Activated naive CD4-positive, alpha-beta T cell treated with anti-CD3 and anti-CD28 coated beads for 36 hours (primary cell): ENCODE measurements at regions of chr7 and their contacts with region 1.

Region 1: GRCh38 chr7:102396027-102397019 is at the start of gene PRKRIP1:
- DNase-seq: peak; percentile 91
- H3K4me3 Mint-ChIP-seq: peak within 1 kb of the TSS; percentile 91
- H3K27ac Mint-ChIP-seq: peak within 1 kb of the TSS; percentile 88
- H3K4me1 Mint-ChIP-seq: peaks cover 19% of the 10 kb centered on the region
- H3K27me3 Mint-ChIP-seq: no peaks in the 10 kb centered on the region
- total RNA-seq, gene PRKRIP1: 17.8 to 18.5 TPM

Region 2: GRCh38 chr7:102044984-102045673 is 351.2 kb before region 1 on chr7:
- CTCF ChIA-PET with region 1: no interaction called
- intact Hi-C with region 1: no loop called
- DNase-seq: no peak
- H3K4me3 Mint-ChIP-seq: no peak overlapping the region
- H3K27ac Mint-ChIP-seq: no peak overlapping the region
- H3K4me1 Mint-ChIP-seq: peaks cover 9% of the 10 kb centered on the region
- H3K27me3 Mint-ChIP-seq: no peaks in the 10 kb centered on the region

Region 3: DNA sequence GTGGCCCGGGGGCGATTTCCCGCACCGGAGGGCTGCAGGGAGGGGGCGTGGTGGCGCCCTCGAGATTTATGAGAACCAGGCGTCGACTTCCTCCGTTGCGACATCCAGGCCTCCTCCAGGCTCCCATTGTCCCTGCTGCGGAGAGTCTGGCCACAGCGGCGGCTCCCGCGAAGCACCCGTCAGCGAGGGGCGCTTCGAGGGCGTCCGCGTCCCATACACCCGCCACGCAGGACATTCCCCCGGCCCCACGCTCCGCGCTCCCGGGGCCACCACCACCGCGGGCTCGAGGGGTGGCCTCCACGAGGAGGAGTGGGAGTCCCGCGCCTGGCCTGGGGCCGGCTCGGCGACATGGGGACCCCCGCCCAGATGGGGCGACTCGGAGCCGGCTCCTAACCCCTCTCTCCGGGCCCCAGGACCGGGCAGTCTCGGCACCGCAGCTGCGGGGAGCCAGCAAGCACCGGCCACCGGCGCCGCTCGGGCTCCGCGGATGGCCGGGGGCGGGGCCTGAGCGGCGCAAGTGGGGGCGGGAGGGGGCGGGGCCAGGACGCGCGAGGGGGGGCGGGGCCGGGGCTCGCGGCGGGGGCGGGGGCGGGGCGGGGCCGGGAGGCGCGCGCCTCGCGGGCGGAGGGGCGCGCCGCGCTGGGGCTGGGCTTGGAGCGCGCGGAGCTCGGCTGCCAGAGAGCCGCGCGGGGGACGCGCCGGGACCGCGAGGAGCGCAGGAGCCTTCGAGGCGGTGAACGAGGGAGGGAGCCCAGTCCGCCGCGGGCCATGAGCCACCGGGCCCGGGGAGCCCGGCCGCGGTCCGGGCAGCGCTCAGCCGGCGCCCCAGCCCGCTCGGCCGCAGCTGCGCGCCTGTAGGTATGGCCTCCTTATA is 109.8 kb before region 1 on chr7 and contains the start of gene SH2B2:
- CTCF ChIA-PET with region 1: interaction called, 4 read pairs
- intact Hi-C with region 1: loop called (anchors 1 kb)
- DNase-seq: peak; percentile 56
- H3K4me3 Mint-ChIP-seq: peak within 1 kb of the TSS; percentile 64
- H3K27ac Mint-ChIP-seq: no peak within 1 kb of the TSS
- H3K4me1 Mint-ChIP-seq: peaks cover 28% of the 10 kb centered on the region
- H3K27me3 Mint-ChIP-seq: peaks cover 10% of the 10 kb centered on the region
- total RNA-seq, gene SH2B2: 1.4 TPM

Region 4: DNA sequence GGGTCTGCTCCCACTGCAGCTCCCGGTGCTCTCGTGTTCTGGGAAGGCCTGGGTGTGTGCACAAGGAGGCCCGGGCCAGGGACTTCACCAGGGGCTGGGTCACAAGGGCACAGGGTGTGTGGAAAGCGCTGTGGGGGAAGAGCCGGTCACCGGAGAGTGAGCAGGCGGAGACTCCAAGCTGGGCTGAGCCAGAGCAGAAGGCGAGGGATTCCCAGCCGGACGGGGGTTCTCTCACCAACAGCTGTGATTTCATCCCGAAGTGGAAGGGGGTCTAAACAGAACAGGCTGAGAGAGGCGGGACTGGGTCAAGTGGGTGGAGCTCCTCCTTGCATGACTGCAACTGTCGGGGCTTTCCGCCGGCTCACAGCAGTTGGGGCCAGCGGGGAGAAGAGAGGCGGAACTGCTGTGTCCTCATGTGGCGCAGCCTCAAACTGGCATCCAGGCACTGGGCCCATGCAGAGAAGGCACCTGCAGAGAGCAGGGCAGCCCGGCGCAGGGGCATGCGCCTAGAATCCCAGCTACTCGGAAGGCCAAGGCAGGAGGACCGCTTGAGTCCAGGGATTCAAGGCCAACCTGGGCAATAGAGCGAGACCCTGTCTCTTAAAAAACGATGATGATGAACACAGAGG is 29.4 kb after region 1 on chr7:
- CTCF ChIA-PET with region 1: interaction called, 5 read pairs
- intact Hi-C with region 1: loop called (anchors 1 kb)
- DNase-seq: peak; percentile 93
- H3K4me3 Mint-ChIP-seq: peak overlapping the region; percentile 77
- H3K27ac Mint-ChIP-seq: peak overlapping the region; percentile 100
- H3K4me1 Mint-ChIP-seq: peaks cover 67% of the 10 kb centered on the region
- H3K27me3 Mint-ChIP-seq: no peaks in the 10 kb centered on the region

Region 5: DNA sequence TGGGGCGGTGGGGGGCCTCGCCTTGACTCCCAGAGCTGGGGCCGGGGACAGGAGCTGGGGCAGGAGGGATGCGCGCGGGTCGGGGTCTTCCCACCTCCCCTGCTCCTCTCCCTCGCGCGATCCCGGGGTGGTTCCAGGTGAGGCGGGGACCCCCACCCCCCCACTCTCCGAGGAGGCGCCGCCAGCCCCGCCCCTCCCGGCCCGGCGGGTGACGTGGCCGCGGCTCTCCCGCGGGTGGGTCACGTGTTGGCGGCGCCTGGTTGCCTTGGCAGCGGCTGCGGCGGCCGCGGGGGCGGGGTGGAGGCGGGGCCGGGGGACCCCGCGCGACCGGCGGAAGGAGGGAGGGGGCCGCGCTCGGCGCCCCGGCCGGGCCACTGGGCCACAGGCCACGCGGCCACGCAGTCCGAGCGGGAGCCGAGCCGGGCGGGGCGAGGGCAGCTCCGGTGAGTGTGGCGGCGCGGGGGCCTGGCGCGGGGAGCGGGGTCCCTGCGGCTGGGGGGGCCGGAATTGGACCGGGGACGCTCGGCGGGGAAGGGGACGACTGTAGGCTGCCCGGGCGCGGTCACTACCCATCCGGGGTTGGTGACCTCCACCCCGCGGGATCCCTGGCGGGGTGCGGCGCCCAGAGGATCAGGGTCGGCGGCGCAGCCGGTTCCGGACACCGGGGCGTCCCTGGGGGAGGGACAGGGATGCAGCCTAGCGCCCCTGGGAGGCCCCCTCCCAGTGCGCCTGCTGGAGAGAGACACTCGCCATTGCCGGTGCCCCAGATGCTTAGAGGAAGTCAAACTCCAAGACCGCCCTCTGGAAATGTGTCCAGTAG is 37.1 kb after region 1 on chr7 and contains the start of gene ORAI2:
- CTCF ChIA-PET with region 1: interaction called, 3 read pairs
- intact Hi-C with region 1: loop called (anchors 1 kb)
- DNase-seq: peak; percentile 81
- H3K4me3 Mint-ChIP-seq: peak within 1 kb of the TSS; percentile 79
- H3K27ac Mint-ChIP-seq: peak within 1 kb of the TSS; percentile 98
- H3K4me1 Mint-ChIP-seq: peaks cover 49% of the 10 kb centered on the region
- H3K27me3 Mint-ChIP-seq: no peaks in the 10 kb centered on the region
- total RNA-seq, gene ORAI2: 15.4 to 16.4 TPM

Region 6: GRCh38 chr7:102992938-102993700 is 596.8 kb after region 1 on chr7:
- CTCF ChIA-PET with region 1: no interaction called
- intact Hi-C with region 1: no loop called
- DNase-seq: no peak
- H3K4me3 Mint-ChIP-seq: no peak overlapping the region
- H3K27ac Mint-ChIP-seq: no peak overlapping the region
- H3K4me1 Mint-ChIP-seq: peaks cover 3% of the 10 kb centered on the region
- H3K27me3 Mint-ChIP-seq: no peaks in the 10 kb centered on the region